ENCODE measurements at regions of chr17 and their contacts with region 1.

Region 1: DNA sequence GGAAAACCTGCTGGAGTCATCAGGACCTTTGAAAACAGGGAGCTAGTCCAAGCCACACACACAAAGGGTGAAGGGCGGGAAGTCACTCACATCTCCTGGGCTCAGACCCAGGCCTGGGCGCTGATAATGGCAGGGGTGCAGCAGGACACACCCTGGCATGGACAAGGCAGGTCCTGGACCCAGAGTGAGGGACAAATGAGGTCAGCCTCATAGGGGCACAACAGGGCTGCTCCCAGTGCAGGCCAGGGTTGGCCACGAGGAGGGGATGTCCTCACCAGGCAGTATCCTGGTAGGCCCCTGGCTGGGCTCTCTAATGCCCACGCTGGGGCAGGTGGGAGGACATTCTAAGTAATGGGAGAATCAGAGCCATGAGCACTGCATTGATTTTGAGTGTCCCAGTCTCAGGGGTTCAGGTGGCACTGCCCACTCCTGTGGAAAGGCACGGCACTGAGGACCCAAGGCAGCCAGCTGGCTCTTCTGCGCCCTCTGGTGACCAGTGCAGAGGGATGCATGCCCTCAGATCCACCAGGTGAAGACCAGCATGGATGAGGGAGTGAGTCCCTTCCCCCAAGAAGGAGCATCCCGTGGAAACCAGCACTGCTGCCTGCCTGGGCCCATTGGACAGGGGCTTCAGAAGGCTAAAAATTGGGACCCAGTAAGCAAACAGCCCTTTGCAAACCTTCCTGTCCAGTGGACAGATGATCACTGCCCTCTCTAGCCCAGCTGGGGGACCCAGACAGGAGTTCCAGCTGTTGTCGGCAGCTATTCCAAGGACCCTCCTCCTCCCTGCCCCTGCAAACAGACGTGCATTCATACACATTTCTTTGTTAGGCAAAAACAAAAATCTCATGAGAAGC is 23.4 kb upstream of the SREBF1 start:
- H3K4me3 ChIP-seq: no peak overlapping the region
- H3K27ac ChIP-seq: no peak overlapping the region
- H3K4me1 ChIP-seq: no peaks in the 10 kb centered on the region; the same call in 1 of the 2 replicates
- CTCF ChIP-seq: peak; percentile 97

Region 2: GRCh38 chr17:17818088-17818526 is 42.0 kb before region 1 on chr17:
- CTCF ChIA-PET with region 1: interaction called, 40 read pairs
- POLR2A ChIA-PET with region 1: no interaction called
- H3K4me3 ChIP-seq: no peak overlapping the region
- H3K27ac ChIP-seq: peak overlapping the region; percentile 28; the same call in 1 of the 2 replicates
- H3K4me1 ChIP-seq: peaks cover 19% of the 10 kb centered on the region
- CTCF ChIP-seq: no peak

Region 3: DNA sequence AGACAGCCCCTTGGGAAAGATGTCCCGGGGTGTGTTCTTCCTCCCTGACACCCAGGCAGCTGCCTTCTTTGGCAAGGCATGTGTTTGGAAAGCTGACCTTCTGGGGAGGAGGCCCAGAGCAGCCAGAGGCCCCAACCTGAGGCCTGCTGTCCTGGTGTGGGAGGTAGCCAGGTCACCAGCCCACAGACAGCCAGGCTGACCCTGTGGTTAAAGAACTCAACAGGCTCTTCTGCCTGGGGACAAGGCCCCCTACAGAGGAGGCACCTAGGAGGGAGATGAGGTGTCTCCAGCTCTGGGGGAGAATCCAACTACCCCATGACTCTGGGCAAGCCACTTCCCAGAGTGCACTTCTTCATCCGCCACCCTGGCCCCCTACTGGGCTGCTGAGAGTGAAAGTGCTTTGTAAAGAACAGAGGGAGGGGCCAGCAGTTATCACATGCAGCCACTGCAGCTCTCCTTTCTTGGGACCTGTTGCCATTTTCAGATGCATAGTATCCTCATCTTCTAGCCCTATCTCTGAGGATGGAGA is 10.2 kb before region 1 on chr17:
- CTCF ChIA-PET with region 1: interaction called, 18 read pairs
- POLR2A ChIA-PET with region 1: no interaction called
- H3K4me3 ChIP-seq: no peak overlapping the region
- H3K27ac ChIP-seq: peak overlapping the region; percentile 70
- H3K4me1 ChIP-seq: peaks cover 25% of the 10 kb centered on the region
- CTCF ChIP-seq: no peak; the same call in 1 of the 2 replicates

Measured in HEK293 (cell line).